ENCODE measurements at regions of chr20 and their contacts with region 1.

Region 1: DNA sequence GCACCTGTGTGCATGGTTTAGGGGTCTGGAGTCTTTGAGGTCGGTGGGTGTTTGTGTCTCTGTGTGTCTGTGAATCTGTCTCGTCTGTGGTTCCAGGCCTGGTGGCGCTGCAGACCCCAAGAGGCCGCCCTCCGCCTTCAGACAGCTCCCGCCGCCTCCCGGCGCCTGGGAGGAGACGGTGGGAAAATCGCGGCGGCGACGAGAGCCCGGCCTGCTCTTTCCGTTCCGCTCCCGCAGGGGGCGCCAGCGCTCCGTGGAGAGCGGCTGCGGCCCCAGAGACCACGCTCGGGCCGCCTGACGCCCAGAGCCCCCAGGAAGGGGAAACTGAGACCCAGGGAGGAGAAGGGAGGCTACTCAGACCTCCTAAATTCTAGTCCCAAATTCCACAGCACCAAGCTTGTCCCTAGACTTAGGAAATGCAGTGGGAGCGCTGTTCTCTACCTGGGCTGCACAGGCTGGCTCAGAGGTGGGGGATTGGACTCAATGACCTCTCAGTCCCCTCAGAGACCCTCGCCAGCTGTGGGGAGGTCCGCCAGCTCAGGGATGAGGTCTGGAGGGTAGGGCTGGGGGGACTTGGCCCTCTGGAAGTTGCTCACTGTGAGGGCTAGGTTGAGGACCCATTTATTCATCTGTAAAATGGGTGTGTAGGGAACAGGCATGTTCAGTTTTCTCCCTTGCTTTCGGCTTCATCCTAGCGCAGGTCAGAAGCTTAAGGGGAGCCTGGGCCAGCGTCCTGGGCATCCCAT is 36.9 kb upstream of the BLCAP start:
- DNase-seq: peak; percentile 17 to 35 (median 34)
- H3K4me3 ChIP-seq: no peak overlapping the region
- H3K27ac ChIP-seq: no peak overlapping the region
- H3K4me1 ChIP-seq: peaks cover 0 to 18% (median 17%) of the 10 kb centered on the region in 4 experiments
- H3K27me3 ChIP-seq: peaks cover 3 to 50% (median 5%) of the 10 kb centered on the region in 5 experiments

Region 2: DNA sequence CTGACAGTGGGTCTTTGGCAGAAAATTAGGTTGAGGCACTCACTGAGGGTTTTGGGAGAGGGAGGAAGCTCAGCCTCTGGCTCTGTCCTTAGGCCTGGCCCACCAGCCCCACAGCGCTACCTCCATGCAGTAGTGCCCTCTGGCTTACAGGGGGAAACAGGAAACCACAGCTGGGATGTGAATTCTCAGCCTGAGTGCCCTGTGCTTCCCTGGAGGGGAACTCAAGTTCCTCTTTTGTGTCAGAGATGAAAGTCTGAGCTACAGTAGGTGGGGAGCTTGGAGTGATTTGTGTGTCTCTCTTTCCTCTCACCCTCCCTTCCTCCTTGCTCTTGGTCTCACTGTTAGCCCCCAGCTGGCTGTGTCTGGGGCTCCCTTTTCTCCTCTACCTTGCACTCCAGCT is 11.3 kb after region 1 on chr20:
- CTCF ChIA-PET with region 1: interaction called, 23 read pairs
- POLR2A ChIA-PET with region 1: no interaction called
- DNase-seq: peak; percentile 58 to 80 (median 76)
- H3K4me3 ChIP-seq: no peak overlapping the region
- H3K27ac ChIP-seq: no peak overlapping the region
- H3K4me1 ChIP-seq: peaks cover 6 to 20% (median 15%) of the 10 kb centered on the region in 4 experiments
- H3K27me3 ChIP-seq: peaks cover 0 to 25% (median 6%) of the 10 kb centered on the region in 5 experiments

Region 3: GRCh38 chr20:37990571-37991151 is 426.1 kb after region 1 on chr20:
- CTCF ChIA-PET with region 1: interaction called, 64 read pairs
- POLR2A ChIA-PET with region 1: no interaction called
- DNase-seq: peak; percentile 75 to 96 (median 95)
- H3K4me3 ChIP-seq: no peak overlapping the region
- H3K27ac ChIP-seq: peak overlapping the region in 1 of 2 experiments; percentile 41
- H3K4me1 ChIP-seq: peaks cover 12 to 26% (median 19%) of the 10 kb centered on the region in 4 experiments
- H3K27me3 ChIP-seq: no peaks in the 10 kb centered on the region